Naive thymus-derived CD4-positive, alpha-beta T cell (primary cell): ENCODE measurements at regions of chr5 and their contacts with region 1.

Region 1: GRCh38 chr5:72955768-72956323 is at the start of gene FCHO2:
- DNase-seq: peak; percentile 82 to 98 (median 91)
- ATAC-seq: peak; percentile 98
- H3K4me3 ChIP-seq: peak within 1 kb of the TSS; percentile 85
- H3K4me3 Mint-ChIP-seq: peak within 1 kb of the TSS; percentile 90 to 95 (median 94)
- H3K27ac ChIP-seq: no peak within 1 kb of the TSS
- H3K27ac Mint-ChIP-seq: peak within 1 kb of the TSS; percentile 22 to 92 (median 80)
- H3K4me1 ChIP-seq: peaks cover 5 to 12% of the 10 kb centered on the region in 2 donors
- H3K4me1 Mint-ChIP-seq: peaks cover 10 to 19% (median 13%) of the 10 kb centered on the region in 7 donors
- H3K27me3 ChIP-seq: peaks cover 3 to 4% of the 10 kb centered on the region in 2 donors
- H3K27me3 Mint-ChIP-seq: peaks cover 43 to 69% (median 55%) of the 10 kb centered on the region in 5 donors
- total RNA-seq, gene FCHO2: 1.7 to 7.1 (median 3.0) TPM

Region 2: GRCh38 chr5:72319976-72320752 is 635.7 kb before region 1 on chr5 and contains the starts of genes MRPS27 and PTCD2:
- CTCF ChIA-PET with region 1: no interaction called
- POLR2A ChIA-PET with region 1: no interaction called
- intact Hi-C with region 1: loop called in 1 of 2 experiments (anchors 5 kb)
- DNase-seq: peak; percentile 71 to 96 (median 94)
- ATAC-seq: peak; percentile 100
- H3K4me3 ChIP-seq: peak within 1 kb of the TSS; percentile 93
- H3K4me3 Mint-ChIP-seq: peak within 1 kb of the TSS; percentile 93 to 100 (median 98)
- H3K27ac ChIP-seq: peak within 1 kb of the TSS; percentile 89
- H3K27ac Mint-ChIP-seq: peak within 1 kb of the TSS; percentile 88 to 99 (median 95)
- H3K4me1 ChIP-seq: peaks cover 7 to 14% of the 10 kb centered on the region in 2 donors
- H3K4me1 Mint-ChIP-seq: peaks cover 24 to 65% (median 47%) of the 10 kb centered on the region in 7 donors
- H3K27me3 ChIP-seq: no peaks in the 10 kb centered on the region
- H3K27me3 Mint-ChIP-seq: no peaks in the 10 kb centered on the region
- total RNA-seq, gene MRPS27: 36.6 to 54.0 (median 39.5) TPM
- total RNA-seq, gene PTCD2: 5.0 to 12.6 (median 11.2) TPM

Region 3: DNA sequence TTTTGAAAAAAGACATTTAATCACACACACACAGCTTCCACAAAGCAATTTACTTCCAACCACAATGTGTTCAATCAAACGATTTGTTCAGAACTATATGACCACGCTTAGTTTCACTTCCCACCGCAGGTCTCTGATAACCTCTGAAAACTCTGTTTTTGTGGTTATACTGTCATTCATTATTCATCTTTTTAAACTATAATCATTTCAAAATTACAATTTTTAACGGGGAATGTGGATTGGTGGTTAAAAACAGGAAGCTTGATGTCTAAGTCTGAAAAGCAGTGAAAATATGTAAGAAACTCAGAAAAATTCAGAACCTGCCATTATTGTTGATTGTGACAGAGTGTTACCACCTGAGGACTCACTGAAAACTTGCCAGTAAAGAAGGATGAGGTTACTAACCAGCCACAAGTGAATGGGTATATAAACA is 204.4 kb after region 1 on chr5:
- CTCF ChIA-PET with region 1: no interaction called
- POLR2A ChIA-PET with region 1: no interaction called
- intact Hi-C with region 1: loop called in 1 of 2 experiments (anchors 2 kb)
- DNase-seq: peak in 8 of 9 donors; percentile 59 to 83 (median 76)
- ATAC-seq: peak; percentile 92
- H3K4me3 ChIP-seq: no peak overlapping the region
- H3K4me3 Mint-ChIP-seq: peak overlapping the region in 9 of 10 donors; percentile 37 to 74 (median 63)
- H3K27ac ChIP-seq: no peak overlapping the region
- H3K27ac Mint-ChIP-seq: peak overlapping the region; percentile 7 to 87 (median 61)
- H3K4me1 ChIP-seq: peaks cover 17 to 31% of the 10 kb centered on the region in 2 donors
- H3K4me1 Mint-ChIP-seq: peaks cover 21 to 41% (median 35%) of the 10 kb centered on the region in 7 donors
- H3K27me3 ChIP-seq: peaks cover 10 to 24% of the 10 kb centered on the region in 2 donors
- H3K27me3 Mint-ChIP-seq: peaks cover 52 to 88% (median 77%) of the 10 kb centered on the region in 5 donors

Region 4: DNA sequence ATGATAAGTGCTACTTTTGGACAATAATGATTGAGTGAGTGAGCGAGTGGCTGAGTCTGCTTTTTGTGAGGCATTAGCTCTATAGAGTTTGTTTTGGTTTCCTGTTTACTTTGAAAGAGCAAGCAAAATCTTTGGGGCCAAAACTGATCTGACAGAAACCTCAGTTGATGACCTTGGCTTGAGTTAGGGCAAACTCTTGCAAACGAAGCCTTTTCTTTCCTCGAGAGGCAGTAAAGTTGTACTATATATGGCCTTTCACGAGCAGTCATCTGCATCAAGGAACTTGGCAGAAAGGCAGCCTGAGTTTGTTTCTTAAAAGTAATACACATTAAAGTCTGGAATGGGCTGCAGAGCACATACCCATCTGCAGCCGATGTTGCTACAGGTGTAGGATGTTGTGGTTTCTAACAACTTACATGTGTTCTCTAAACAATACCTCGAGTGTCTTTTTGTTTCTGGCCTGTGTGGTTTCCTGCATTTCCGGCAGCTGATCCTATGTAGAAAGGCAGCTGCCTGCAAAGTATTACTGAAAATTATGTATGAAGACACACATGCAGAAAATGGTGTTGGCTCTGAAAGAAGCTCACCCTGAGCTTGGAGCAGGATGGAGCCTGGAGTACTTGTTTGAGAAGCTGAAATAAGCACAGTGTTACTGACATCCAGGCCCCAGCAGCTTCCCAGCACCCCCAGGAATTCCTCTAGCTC is 431.9 kb after region 1 on chr5:
- CTCF ChIA-PET with region 1: no interaction called
- POLR2A ChIA-PET with region 1: no interaction called
- intact Hi-C with region 1: loop called in 1 of 2 experiments (anchors 5 kb)
- DNase-seq: peak in 8 of 9 donors; percentile 28 to 90 (median 82)
- ATAC-seq: peak; percentile 96
- H3K4me3 ChIP-seq: peak overlapping the region; percentile 3
- H3K4me3 Mint-ChIP-seq: peak overlapping the region; percentile 39 to 76 (median 72)
- H3K27ac ChIP-seq: no peak overlapping the region
- H3K27ac Mint-ChIP-seq: peak overlapping the region in 6 of 9 donors; percentile 1 to 81 (median 37)
- H3K4me1 ChIP-seq: peaks cover 20 to 31% of the 10 kb centered on the region in 2 donors
- H3K4me1 Mint-ChIP-seq: peaks cover 16 to 34% (median 24%) of the 10 kb centered on the region in 7 donors
- H3K27me3 ChIP-seq: peaks cover 8 to 11% of the 10 kb centered on the region in 2 donors
- H3K27me3 Mint-ChIP-seq: peaks cover 24 to 68% (median 35%) of the 10 kb centered on the region in 5 donors

Region 5: DNA sequence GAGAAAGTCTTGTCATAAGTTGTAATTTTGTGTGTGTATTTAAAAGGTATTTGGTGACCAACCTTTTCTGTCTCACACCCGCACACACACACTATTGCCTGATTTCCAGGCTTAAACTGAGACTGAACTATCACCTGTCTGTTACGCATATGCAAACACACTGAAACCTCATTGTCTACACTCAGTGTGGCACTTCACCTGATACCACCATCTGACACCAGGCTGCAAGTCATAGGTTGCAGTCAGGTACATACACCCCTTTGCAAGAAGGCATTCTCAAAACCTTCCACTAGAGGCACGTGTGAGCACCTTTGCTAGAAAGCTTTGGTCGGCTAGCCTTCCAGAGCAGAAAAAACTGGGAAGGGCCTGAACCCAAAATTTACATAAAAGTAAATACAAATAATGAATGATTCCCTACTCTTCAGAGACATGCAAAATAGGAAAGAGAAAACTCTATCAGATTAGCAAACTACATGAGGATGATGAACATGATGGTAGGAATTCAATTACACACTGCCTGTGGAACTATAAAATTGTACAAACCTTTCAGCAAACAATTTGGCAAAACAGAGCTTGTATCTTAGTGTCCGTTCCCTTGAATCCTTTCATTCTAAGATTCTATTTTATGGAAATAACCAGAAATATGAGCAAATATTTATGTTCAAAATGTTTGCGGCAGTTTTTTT is 498.6 kb after region 1 on chr5:
- CTCF ChIA-PET with region 1: no interaction called
- POLR2A ChIA-PET with region 1: no interaction called
- intact Hi-C with region 1: loop called (anchors 2 to 5 kb)
- DNase-seq: peak in 4 of 9 donors; percentile 42 to 49 (median 45)
- ATAC-seq: peak; percentile 86
- H3K4me3 ChIP-seq: no peak overlapping the region
- H3K4me3 Mint-ChIP-seq: no peak overlapping the region
- H3K27ac ChIP-seq: no peak overlapping the region
- H3K27ac Mint-ChIP-seq: no peak overlapping the region
- H3K4me1 ChIP-seq: peaks cover 0 to 4% of the 10 kb centered on the region in 2 donors
- H3K4me1 Mint-ChIP-seq: peaks cover 2 to 12% (median 7%) of the 10 kb centered on the region in 7 donors
- H3K27me3 ChIP-seq: peaks cover 35 to 49% of the 10 kb centered on the region in 2 donors
- H3K27me3 Mint-ChIP-seq: peaks cover 75 to 84% (median 80%) of the 10 kb centered on the region in 5 donors

Region 6: DNA sequence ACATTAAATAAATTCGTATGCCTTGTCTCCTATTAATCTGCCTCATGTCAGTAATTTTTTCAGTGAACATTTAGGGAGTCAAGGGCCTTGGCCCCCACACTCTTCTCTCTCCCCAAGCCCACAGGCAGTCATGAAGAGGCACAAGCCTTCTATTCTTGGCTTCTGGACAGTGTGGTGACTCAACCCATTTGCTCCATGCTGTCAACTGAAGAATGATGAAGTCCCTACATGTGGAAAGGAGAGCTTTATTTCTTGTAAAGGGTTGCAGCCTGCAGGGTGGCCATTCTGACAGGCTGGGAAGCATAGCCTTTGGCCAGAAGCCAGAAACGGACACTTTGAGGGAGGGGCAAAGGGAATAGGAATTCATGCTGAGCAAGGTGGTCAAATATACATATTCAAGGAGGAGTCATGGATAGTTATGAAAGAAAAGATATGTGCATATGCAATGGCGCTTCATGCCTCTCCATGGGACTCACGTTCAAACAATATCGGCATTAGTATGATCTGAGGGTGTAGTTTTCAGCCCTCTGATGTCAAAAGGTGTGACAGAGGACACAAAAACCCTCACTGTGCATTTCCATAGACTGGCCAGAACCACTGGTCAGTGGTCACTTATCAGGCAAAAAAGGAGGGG is 578.3 kb after region 1 on chr5:
- CTCF ChIA-PET with region 1: no interaction called
- POLR2A ChIA-PET with region 1: no interaction called
- intact Hi-C with region 1: loop called in 1 of 2 experiments (anchors 10 kb)
- DNase-seq: no peak
- ATAC-seq: no peak
- H3K4me3 ChIP-seq: no peak overlapping the region
- H3K4me3 Mint-ChIP-seq: no peak overlapping the region
- H3K27ac ChIP-seq: no peak overlapping the region
- H3K27ac Mint-ChIP-seq: no peak overlapping the region
- H3K4me1 ChIP-seq: no peaks in the 10 kb centered on the region
- H3K4me1 Mint-ChIP-seq: peaks cover 0 to 3% (median 0%) of the 10 kb centered on the region in 7 donors
- H3K27me3 ChIP-seq: no peaks in the 10 kb centered on the region
- H3K27me3 Mint-ChIP-seq: peaks cover 7 to 45% (median 21%) of the 10 kb centered on the region in 5 donors